Left cardiac atrium (tissue), 4 donors: ENCODE measurements at regions of chr16 and their contacts with region 1.

Region 1: DNA sequence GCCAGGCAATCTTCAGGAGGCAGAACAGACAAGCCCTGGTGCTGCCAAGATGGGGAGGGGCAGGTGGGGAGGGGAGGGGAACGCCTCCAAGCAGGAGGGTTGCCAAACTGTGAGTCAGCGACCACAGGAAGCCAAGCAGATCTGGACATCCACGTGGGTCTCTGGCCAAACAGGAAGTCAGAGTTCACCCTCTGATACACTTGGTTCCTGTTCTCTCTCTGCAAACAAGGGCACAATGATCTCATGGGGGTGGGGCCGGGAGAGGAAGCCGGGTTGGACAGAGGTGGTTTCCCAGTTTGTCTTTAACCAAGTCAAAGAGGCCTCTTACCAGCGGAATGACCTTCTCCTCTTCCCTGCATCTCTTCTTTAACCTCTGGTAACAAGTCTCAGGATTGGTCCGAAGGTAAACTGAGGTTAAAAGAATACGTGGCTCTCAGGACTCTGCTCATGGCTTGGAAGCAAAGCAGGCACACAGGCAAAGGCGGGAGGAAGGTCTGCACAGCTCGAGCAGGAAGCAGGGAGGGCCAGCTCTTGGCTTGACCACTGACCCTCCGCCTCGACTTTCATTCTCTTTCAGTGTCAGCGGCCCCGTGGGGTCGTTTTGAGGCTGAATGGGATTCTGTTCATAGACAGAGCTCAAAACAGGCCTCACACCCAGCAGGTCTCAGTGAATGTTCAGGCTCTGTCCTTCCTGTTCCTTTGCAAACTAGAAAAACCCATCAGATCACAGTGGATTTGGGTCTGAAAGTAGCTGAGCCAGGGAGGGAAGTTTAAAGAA is 32.9 kb downstream of the TK2 start:
- DNase-seq: peak; percentile 98
- ATAC-seq: peak; percentile 94 to 95

Region 2: GRCh38 chr16:66186251-66186785 is 330.7 kb before region 1 on chr16:
- intact Hi-C with region 1: no loop called
- DNase-seq: no peak
- ATAC-seq: no peak

Region 3: DNA sequence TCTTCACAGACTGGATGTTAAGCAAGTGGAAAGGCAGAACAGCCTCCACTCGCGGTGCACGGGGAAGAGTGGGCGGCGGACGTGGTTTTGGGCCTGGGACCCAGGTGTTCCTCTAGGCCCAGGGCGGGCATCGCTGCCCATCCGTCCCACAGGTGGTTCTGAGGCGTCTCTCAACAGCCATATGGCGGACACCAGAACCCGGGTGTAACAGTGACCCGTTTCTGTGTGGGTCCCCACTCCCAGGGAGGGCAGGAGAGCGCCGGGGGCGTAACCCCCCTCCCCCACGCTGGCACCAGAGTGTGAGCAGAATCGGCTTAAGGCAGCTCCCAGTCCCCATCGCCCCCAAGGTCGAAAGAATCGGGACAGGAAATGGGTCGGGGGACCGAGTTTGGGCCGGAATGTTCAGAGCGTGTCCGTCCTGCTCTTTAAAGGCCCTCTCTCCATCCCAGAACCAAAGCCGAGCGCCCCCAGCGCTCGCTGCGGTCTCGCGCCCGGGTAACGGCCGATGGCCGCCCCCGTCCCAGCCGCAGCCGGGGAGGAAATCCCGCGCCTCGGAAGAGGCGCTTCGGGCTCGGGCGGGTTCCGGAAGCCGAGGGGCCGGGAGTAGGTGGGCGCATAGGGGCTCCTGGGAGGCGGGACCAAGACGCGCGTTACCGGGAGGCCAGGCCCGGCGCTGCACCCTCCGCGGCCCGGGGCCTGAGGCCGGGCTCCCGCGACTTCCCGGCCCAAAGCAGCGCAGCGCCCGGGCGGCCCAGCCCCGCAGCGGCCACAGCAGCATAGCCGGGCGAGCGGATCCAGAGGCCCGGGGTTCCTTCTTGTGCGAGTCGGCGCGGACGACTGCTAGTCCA is 32.5 kb after region 1 on chr16 and contains the start of gene TK2:
- intact Hi-C with region 1: loop called in 1 of 2 experiments (anchors 2 kb)
- DNase-seq: peak; percentile 77
- ATAC-seq: peak; percentile 72 to 81
- total RNA-seq, gene TK2: 22.3 to 28.2 TPM

Region 4: DNA sequence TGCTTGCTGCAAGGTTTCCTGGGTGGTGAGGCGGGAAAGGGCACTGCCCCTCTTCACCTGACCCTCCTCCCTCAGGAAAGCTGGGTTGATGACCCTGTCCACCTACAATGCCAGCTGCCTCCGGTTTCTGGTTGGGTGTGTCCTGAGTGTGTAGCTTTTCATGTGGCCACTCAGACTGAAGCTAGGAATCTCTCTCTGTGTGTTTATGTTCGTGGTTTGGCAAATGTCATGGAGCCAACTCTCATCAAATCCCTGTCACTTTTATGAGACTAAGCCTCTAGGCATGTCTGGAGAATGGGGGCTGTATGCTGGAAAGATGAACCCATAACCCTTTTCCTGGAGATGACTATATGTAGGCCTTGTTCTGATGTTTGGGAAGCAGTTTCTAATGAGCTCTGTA is 779.4 kb after region 1 on chr16:
- intact Hi-C with region 1: no loop called
- DNase-seq: no peak
- ATAC-seq: no peak